ENCODE measurements at regions of chr6 and their contacts with region 1.

Region 1: DNA sequence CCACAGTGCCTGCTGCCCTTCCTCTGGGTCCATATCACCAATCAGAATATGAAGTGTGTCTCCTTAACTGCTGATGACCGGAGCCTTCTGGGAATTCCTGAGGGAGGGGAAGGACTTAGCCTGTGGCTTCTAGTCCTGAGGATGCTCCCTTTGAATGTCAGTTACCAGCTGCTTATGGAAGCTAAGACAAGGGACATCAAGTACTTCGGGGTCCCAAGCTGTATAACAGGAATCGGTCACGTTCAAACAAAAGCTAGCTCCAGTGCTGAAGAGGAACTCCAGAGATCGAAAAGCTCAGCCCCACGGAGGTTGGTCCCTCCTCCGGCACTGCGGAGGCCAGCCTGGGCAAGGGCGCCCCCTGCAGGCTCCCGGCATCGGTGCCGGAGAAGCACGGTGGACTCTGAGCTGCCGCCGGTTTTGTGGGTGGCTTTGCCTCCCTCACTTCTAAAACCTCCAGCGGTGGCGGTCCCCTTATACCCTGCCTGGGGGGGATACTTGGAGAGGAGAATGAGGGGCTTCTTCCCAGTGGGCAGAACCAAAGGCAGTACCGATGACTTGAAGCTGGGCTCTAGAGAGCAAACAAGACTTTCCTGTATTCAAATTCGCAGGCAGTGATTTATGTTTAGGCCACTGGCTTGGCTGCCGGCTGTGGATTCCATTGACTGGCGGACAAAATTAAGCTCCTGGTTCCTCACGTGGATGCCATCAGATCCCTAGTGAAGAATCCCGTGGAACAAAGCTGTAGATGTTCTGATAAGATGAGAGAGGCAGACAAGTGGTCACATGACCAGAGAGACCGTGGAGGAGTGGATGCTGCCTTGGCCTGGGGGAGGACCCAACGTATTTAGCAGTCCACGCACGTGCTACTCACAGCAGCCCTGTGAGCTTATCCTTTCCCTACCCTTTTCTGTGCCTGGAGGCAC is 16.2 kb upstream of the UBR2 start:
- DNase-seq: peak; percentile 76 to 94 (median 85)
- ATAC-seq: peak; percentile 99
- H3K4me3 ChIP-seq: peak overlapping the region; percentile 19 to 36
- H3K4me3 Mint-ChIP-seq: peak overlapping the region; percentile 67
- H3K27ac ChIP-seq: no peak overlapping the region
- H3K27ac Mint-ChIP-seq: no peak overlapping the region
- H3K4me1 ChIP-seq: peaks cover 3% of the 10 kb centered on the region
- H3K4me1 Mint-ChIP-seq: peaks cover 11% of the 10 kb centered on the region
- H3K27me3 ChIP-seq: no peaks in the 10 kb centered on the region
- H3K27me3 Mint-ChIP-seq: peaks cover 3% of the 10 kb centered on the region
- CTCF ChIP-seq: peak; percentile 96

Region 2: DNA sequence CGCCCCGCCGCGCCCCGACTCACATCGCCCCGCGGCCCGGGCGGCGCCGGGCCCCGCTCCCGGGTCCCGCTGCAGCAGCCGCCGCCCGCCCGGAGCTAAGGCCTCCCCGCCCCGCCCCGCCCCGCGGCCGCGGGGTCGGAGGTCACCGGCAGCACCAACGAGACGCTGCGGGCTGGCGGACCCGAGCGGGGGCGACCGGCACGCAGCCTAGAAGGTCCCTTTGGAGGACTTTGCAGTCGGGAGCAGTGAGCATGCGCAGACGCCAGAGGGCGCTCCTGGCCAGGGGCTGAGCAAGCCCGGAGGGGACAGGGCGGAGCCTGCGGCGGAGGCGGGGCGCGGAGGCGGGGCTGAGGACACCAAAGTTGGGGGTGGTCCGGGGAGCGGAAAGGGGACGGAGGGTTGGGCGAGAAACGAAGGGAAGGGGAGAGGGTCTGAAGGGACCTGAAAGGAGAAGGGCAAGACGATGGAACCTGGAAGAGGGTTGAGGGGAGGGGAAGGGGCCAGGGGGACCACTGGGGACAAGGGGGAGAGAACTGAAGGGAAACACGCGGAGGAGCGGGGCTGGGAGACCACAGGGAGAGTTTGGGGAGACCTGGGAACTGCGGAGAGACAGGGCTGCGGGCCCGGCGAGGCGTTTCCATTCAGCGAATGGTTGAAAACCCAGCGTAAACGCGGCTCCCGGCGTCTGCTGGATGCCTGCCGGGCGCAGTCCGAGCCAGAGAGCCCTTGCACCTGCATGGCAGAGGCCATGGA is 767.7 kb before region 1 on chr6 and contains the start of gene FRS3:
- CTCF ChIA-PET with region 1: no interaction called
- POLR2A ChIA-PET with region 1: no interaction called
- intact Hi-C with region 1: loop called in 1 of 2 experiments (anchors 5 kb)
- DNase-seq: peak; percentile 96 to 100 (median 99)
- ATAC-seq: peak; percentile 97
- H3K4me3 ChIP-seq: peak within 1 kb of the TSS; percentile 73 to 93
- H3K4me3 Mint-ChIP-seq: peak within 1 kb of the TSS; percentile 93
- H3K27ac ChIP-seq: peak within 1 kb of the TSS in 1 of 2 experiments; percentile 23
- H3K27ac Mint-ChIP-seq: no peak within 1 kb of the TSS
- H3K4me1 ChIP-seq: peaks cover 18% of the 10 kb centered on the region
- H3K4me1 Mint-ChIP-seq: peaks cover 21% of the 10 kb centered on the region
- H3K27me3 ChIP-seq: no peaks in the 10 kb centered on the region
- H3K27me3 Mint-ChIP-seq: peaks cover 4% of the 10 kb centered on the region
- CTCF ChIP-seq: peak; percentile 74
- total RNA-seq, gene FRS3: 3.7 to 6.2 TPM

Region 3: GRCh38 chr6:42217519-42218367 is 329.9 kb before region 1 on chr6 and contains the start of gene MRPS10:
- CTCF ChIA-PET with region 1: interaction called, 17 read pairs
- POLR2A ChIA-PET with region 1: interaction called, 3 read pairs
- intact Hi-C with region 1: loop called (anchors 1 to 5 kb)
- DNase-seq: peak; percentile 81 to 95 (median 91)
- ATAC-seq: peak; percentile 99
- H3K4me3 ChIP-seq: peak within 1 kb of the TSS; percentile 70 to 93
- H3K4me3 Mint-ChIP-seq: peak within 1 kb of the TSS; percentile 99
- H3K27ac ChIP-seq: peak within 1 kb of the TSS; percentile 63 to 74
- H3K27ac Mint-ChIP-seq: peak within 1 kb of the TSS; percentile 97
- H3K4me1 ChIP-seq: peaks cover 8% of the 10 kb centered on the region
- H3K4me1 Mint-ChIP-seq: peaks cover 25% of the 10 kb centered on the region
- H3K27me3 ChIP-seq: no peaks in the 10 kb centered on the region
- H3K27me3 Mint-ChIP-seq: no peaks in the 10 kb centered on the region
- CTCF ChIP-seq: no peak
- total RNA-seq, gene MRPS10: 17.0 to 17.4 TPM

Region 4: DNA sequence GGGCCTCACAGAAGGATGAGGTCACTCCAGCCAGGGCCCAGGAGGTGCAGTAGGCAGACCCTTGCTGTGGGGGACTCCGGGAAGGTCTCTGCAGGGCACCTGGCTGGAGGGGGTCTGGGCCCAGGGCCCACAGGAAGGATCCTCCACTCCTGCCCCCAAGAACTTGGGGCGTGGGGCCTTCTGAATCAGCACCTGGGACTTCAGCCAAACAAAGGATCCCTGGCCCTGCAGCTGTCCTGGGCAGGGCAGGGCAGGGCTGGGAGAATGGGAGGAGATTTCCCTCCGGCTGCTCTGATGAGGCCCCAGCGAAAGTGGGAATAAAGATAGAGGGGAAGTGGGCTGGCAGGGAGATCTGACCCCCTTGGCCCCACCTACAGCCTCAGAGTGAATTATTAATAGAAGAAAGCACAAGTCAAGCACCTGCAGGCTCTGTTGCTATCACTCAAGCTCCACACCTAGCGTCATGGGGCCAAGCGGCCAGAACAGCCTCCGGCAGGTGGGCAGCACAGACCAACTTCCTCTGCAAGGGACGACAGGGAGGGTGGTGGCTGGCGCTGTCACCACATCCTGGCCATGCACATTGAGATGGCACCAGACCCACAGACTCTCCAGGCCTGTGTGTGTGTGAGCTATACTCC is 268.4 kb before region 1 on chr6:
- CTCF ChIA-PET with region 1: interaction called, 10 read pairs
- POLR2A ChIA-PET with region 1: no interaction called
- intact Hi-C with region 1: no loop called
- DNase-seq: peak in 7 of 9 experiments; percentile 27 to 74 (median 50)
- ATAC-seq: peak; percentile 10
- H3K4me3 ChIP-seq: no peak overlapping the region
- H3K4me3 Mint-ChIP-seq: peak overlapping the region; percentile 64
- H3K27ac ChIP-seq: peak overlapping the region; percentile 59 to 72
- H3K27ac Mint-ChIP-seq: peak overlapping the region; percentile 88
- H3K4me1 ChIP-seq: peaks cover 54% of the 10 kb centered on the region
- H3K4me1 Mint-ChIP-seq: peaks cover 52% of the 10 kb centered on the region
- H3K27me3 ChIP-seq: no peaks in the 10 kb centered on the region
- H3K27me3 Mint-ChIP-seq: no peaks in the 10 kb centered on the region
- CTCF ChIP-seq: no peak

Region 5: DNA sequence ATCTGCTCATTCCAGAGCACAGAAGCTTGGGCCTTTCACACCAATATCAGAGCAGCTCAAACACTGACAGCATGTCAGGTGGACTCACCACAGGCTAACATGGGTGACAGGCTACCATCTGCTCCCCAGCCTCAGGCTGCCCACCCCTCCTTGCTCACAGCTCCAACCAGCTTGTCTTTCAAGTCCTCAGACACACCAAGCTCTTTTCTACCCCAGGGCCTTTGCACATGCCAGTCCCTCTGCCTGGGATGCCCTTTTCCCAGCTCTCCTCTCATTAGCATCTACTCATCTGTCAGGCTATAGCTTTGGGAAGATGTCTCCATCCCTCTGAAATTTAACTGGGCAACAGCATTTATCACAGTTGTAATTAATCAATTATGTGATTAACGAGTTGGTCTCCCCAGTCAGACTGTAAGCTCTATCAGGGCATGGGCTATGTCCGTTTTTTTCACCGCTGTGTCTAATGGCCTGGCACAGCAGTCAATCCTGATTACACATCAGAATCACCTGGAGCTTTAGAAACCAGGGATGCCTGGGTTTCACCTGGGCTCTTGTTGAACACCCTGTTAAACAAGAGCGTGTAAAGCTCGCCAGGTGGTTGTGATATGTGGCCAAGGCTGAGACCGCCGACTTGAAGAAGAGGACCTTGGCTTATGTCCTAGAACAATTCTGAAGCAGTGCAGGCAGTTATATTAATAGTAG is 241.1 kb before region 1 on chr6:
- CTCF ChIA-PET with region 1: interaction called, 30 read pairs
- POLR2A ChIA-PET with region 1: no interaction called
- intact Hi-C with region 1: loop called (anchors 1 kb)
- DNase-seq: no peak
- ATAC-seq: no peak
- H3K4me3 ChIP-seq: no peak overlapping the region
- H3K4me3 Mint-ChIP-seq: no peak overlapping the region
- H3K27ac ChIP-seq: no peak overlapping the region
- H3K27ac Mint-ChIP-seq: no peak overlapping the region
- H3K4me1 ChIP-seq: no peaks in the 10 kb centered on the region
- H3K4me1 Mint-ChIP-seq: peaks cover 45% of the 10 kb centered on the region
- H3K27me3 ChIP-seq: no peaks in the 10 kb centered on the region
- H3K27me3 Mint-ChIP-seq: no peaks in the 10 kb centered on the region
- CTCF ChIP-seq: no peak

Region 6: GRCh38 chr6:42428326-42429041 is 119.2 kb before region 1 on chr6:
- CTCF ChIA-PET with region 1: interaction called, 10 read pairs
- POLR2A ChIA-PET with region 1: no interaction called
- intact Hi-C with region 1: no loop called
- DNase-seq: peak in 6 of 9 experiments; percentile 30 to 79 (median 58)
- ATAC-seq: peak; percentile 86
- H3K4me3 ChIP-seq: no peak overlapping the region
- H3K4me3 Mint-ChIP-seq: peak overlapping the region; percentile 50
- H3K27ac ChIP-seq: peak overlapping the region in 1 of 2 experiments; percentile 72
- H3K27ac Mint-ChIP-seq: peak overlapping the region; percentile 92
- H3K4me1 ChIP-seq: peaks cover 27% of the 10 kb centered on the region
- H3K4me1 Mint-ChIP-seq: peaks cover 68% of the 10 kb centered on the region
- H3K27me3 ChIP-seq: no peaks in the 10 kb centered on the region
- H3K27me3 Mint-ChIP-seq: no peaks in the 10 kb centered on the region
- CTCF ChIP-seq: no peak

Region 7: DNA sequence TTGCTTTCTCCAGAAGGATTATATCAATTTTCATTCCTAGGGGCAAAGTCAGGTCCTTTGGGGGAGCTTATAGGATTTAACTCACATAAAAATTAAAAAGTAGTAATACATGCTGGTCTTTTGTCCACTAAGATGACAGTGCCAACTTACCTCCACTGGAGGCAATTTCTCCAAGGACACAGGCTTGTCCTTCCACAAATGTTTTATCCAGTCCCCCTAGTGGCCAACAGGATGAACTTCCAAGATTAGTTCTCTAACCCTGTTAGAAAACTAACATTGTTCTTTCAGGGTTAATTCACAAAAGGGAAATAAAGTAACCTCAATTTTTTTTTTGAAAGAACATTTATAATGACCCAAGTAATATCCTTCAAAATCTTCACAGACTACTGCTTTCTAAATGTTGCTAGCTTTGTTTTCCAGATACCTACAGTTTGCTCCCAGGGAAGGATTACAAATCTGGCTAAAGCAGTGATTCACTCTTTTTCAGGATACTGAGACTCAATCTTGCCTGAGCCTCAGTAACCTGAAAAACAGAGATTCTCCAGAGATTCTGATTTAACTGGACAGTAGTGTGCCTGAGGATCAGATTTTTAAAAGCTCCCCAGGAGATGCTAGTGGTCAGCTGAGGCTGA is 15.5 kb before region 1 on chr6:
- CTCF ChIA-PET with region 1: interaction called, 25 read pairs
- POLR2A ChIA-PET with region 1: no interaction called
- intact Hi-C with region 1: loop called in 1 of 2 experiments (anchors 1 kb)
- DNase-seq: peak in 4 of 9 experiments; percentile 14 to 72 (median 36)
- ATAC-seq: no peak
- H3K4me3 ChIP-seq: no peak overlapping the region
- H3K4me3 Mint-ChIP-seq: no peak overlapping the region
- H3K27ac ChIP-seq: no peak overlapping the region
- H3K27ac Mint-ChIP-seq: no peak overlapping the region
- H3K4me1 ChIP-seq: no peaks in the 10 kb centered on the region
- H3K4me1 Mint-ChIP-seq: no peaks in the 10 kb centered on the region
- H3K27me3 ChIP-seq: no peaks in the 10 kb centered on the region
- H3K27me3 Mint-ChIP-seq: no peaks in the 10 kb centered on the region
- CTCF ChIP-seq: peak; percentile 80

Region 8: DNA sequence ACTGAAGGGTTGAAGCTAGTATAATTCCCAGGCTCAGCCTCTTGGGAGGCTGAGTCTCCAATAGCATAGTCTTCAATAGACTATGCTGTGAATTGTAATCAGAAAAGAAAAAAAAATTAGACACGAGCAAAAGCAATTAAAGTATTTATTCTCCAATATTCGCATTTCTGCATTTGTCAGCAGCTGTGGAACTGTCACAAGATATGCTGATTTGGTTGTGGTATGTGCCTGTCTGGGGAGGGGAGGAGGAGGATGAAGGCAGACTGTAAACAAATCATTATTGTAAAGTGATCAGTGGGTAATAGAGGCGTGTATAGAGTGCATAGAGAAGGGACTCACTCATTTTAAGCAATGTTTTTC is 224.1 kb after region 1 on chr6:
- CTCF ChIA-PET with region 1: no interaction called
- POLR2A ChIA-PET with region 1: no interaction called
- intact Hi-C with region 1: no loop called
- DNase-seq: peak in 5 of 9 experiments; percentile 34 to 83 (median 57)
- ATAC-seq: peak; percentile 21
- H3K4me3 ChIP-seq: peak overlapping the region; percentile 22 to 24
- H3K4me3 Mint-ChIP-seq: peak overlapping the region; percentile 70
- H3K27ac ChIP-seq: peak overlapping the region; percentile 81 to 98
- H3K27ac Mint-ChIP-seq: peak overlapping the region; percentile 100
- H3K4me1 ChIP-seq: peaks cover 67% of the 10 kb centered on the region
- H3K4me1 Mint-ChIP-seq: peaks cover 72% of the 10 kb centered on the region
- H3K27me3 ChIP-seq: no peaks in the 10 kb centered on the region
- H3K27me3 Mint-ChIP-seq: no peaks in the 10 kb centered on the region
- CTCF ChIP-seq: no peak

Measured in CD8-positive, alpha-beta T cell (primary cell).